ENCODE measurements at regions of chr14 and their contacts with region 1.

Region 1: DNA sequence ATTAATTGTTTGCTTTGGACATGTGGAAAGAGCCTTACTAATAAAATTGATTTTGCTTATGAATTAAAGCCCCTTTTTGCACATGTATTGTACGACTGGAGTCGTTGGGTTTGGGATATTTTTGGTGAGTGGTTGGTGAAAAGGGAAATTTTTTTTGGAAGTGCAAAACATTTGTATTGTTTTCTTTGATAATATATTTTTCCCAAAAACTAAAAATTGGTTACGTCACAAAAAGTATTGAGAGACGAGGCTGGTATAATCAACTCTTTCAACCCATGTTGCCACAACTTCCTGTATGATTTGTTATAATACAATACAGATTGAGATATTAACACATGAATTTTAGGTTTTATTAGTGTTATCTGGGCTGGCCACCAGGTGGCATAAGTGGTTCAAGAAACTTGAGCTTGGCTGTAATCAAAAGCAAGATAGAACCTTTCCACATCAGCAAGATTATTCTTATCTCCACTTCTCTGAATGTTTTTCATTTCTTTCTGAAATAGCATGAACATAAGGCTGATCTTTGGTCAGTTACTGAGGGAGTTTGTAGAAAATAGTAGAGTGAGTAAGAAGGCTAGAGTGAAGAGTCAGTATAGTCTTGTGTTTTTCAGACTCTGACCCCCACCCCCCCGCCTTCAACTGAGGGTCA is 8.7 kb downstream of the NGDN start:
- DNase-seq: peak in 1 of 2 donors; percentile 67
- ATAC-seq: peak; percentile 69

Region 2: GRCh38 chr14:23379366-23380196 is 98.7 kb before region 1 on chr14:
- intact Hi-C with region 1: no loop called
- DNase-seq: peak; percentile 54 to 75
- ATAC-seq: peak; percentile 94

Region 3: DNA sequence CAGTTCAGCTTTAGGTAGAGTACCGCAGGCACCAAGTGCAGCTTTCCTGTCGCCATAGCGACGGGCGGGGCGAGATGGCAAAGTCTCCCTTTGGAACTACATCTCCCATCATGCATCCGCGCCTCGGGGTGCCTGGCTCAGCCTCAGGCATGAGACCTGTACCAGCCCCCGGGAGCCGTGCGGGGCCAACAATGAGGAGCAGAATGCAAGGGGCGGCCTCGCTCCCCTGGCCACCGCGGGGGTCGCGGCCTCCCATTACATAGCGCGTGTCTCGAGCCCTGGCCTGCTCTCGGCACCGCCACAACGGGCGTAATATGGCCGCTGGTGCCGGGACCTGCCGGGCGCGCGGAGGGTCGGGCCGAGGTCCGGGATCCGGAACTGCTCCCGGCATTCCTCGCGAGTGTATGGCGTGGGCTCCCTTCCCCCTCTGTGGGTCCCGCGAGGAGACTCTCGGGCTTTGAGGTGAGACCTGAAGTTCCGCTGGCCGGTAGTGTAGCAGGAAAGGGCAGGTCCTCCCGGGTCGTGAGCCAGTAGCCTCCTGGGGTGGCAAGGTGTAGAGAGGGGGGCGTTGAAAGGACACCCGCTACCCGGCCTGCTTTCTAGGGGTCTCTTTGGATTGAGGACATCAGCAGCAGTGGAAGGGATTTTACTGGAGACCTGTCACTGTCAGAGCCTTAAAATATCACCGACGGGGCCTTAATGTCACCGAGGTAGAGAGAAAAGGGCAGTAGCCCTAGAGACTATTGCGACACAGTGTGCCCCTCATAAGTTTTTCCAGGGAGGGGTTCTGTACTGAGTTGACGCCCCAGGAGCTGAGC is 77.9 kb after region 1 on chr14 and contains the start of gene THTPA:
- intact Hi-C with region 1: loop called (anchors 5 kb)
- DNase-seq: peak; percentile 95 to 98
- ATAC-seq: peak; percentile 83
- total RNA-seq, gene THTPA: 15.7 to 16.6 TPM

Region 4: GRCh38 chr14:23562268-23563203 is 84.3 kb after region 1 on chr14:
- intact Hi-C with region 1: loop called (anchors 5 kb)
- DNase-seq: no peak
- ATAC-seq: no peak

Measured in left colon (tissue), 2 donors.